ENCODE measurements at regions of chr17 and their contacts with region 1.

Region 1: DNA sequence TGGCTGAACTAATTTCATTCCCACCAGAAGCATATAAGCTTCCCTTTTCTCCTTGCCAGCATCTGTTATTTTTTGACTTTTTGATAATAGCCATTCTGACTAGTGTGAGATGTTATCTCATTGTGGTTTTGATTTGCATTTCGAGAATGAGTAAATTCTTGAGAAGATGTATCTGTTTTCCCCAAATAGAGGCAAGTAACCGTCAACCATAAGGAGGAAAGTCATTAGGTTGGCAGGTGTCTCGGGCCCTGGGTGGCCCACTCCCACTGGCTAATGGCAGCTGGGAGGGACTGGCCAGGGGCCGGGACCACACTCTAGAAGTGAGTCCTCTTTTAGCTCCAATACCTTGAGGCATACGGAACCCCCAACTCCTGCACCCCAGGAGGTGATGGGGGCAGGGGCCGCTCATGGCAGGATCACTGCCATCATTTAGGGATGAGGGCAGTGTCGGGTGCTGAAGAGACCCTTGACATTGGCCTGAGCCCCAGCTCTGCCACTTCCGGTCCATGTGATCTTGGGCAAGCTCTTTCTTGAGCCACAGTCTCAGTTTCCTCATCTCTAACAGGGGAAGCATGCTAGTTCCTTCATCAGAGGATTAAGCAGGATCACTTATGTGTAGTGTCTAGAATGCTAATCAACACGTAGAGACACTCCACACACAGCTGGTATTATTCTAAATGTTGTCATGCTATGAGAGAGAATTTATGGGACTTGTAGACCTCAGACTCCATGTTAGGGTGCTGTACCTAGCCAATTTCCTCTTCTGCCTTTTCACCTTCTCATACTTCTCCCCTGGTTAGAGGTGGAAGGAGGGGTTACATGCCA is 44.3 kb downstream of the RGS9 start:
- DNase-seq: no peak
- H3K4me3 ChIP-seq: no peak overlapping the region
- H3K27ac ChIP-seq: no peak overlapping the region
- H3K4me1 ChIP-seq: no peaks in the 10 kb centered on the region
- H3K27me3 ChIP-seq: no peaks in the 10 kb centered on the region
- CTCF ChIP-seq: no peak
- POLR2A ChIP-seq: no peak

Region 2: DNA sequence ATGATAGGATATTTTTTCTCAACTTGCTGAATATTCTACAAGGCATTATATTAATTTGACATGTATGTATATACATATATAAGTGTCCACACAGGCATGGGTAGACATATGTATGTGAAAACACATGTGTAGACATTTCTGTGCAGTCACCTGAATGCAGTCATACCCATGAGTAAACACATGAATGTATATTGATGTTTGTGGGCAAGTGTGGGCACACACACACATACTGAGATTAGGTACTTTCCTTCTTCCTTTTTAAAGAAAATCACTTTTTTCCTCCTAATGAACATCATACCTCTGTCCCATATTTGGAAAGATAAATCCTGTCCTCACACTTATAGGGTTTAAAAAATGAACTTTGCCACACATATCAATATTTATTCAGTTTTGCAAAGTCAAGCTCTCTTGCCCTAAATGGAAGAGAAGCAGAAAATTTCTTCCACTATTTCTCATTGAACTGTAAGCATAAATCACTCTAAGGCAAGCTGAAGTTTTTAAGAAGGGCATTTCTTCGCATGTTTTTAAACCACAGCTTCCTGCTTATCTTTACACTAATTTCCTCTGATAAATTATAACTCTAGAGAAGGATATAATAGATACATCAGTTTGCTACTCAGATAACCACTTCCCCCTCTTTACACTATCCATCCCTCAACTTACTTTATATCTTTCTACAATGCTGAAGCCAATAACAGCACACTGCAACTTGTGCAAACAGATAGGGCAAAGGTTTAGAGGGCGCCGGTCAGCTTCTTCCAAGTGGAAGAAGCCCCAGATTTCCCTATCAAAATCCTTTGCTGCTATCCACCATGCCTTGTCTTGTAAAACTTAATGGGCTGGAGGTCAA is 212.6 kb before region 1 on chr17:
- intact Hi-C with region 1: no loop called
- DNase-seq: no peak
- H3K4me3 ChIP-seq: no peak overlapping the region
- H3K27ac ChIP-seq: no peak overlapping the region
- H3K4me1 ChIP-seq: no peaks in the 10 kb centered on the region
- H3K27me3 ChIP-seq: no peaks in the 10 kb centered on the region
- CTCF ChIP-seq: no peak
- POLR2A ChIP-seq: no peak

Region 3: DNA sequence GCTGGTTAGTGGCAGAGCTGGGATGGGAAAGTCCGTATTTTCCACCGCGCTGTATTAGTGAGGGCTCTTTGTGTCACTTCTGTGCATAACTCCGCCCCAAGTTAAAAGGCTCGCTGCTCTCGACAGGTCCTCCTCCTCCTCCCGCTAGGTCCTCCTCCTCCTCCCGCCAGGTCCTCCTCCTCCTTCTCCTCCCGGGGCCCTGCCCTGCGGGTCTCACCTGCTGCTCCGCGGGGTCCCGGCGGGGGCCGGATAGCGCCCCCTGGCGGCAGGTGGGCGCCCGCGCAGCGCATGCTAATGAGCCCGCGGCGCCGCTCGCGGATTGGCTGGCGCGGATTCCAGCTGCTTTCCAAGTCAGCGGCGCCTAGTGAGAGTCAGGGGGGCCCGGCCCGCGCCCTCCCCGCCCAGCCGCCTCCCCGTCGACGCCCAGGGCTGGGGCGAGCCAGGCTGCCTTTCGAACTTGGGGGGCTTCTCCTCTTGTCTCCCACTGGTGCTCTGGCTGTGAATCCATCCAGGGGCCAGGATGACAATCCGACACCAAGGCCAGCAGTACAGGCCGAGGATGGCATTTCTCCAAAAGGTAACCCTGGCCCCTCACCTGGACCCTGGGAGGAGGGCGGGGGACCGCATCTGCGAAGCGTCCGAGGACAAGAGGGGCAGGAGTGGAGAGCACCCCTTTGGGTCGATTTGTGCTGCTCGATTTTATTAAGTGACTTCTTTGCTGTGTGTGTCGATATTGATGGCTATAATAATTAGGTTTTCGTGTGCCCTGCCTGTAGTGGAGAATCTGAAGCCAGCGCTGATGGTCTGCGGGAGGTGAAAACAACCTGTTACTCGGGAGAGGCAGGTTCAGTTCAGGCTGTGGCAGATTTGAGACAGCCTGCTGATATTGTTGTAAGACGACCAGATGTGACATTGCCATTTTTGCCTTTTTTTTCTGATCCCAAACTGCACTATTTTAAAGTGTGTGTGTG is 44.1 kb before region 1 on chr17 and contains the start of gene RGS9:
- intact Hi-C with region 1: loop called (anchors 5 kb)
- DNase-seq: peak; percentile 80
- H3K4me3 ChIP-seq: peak within 1 kb of the TSS; percentile 21 to 36
- H3K27ac ChIP-seq: no peak within 1 kb of the TSS
- H3K4me1 ChIP-seq: no peaks in the 10 kb centered on the region
- H3K27me3 ChIP-seq: no peaks in the 10 kb centered on the region
- CTCF ChIP-seq: peak; percentile 93 to 99 (median 96)
- POLR2A ChIP-seq: no peak
- total RNA-seq, gene RGS9: 7.9 to 9.3 TPM

Region 4: DNA sequence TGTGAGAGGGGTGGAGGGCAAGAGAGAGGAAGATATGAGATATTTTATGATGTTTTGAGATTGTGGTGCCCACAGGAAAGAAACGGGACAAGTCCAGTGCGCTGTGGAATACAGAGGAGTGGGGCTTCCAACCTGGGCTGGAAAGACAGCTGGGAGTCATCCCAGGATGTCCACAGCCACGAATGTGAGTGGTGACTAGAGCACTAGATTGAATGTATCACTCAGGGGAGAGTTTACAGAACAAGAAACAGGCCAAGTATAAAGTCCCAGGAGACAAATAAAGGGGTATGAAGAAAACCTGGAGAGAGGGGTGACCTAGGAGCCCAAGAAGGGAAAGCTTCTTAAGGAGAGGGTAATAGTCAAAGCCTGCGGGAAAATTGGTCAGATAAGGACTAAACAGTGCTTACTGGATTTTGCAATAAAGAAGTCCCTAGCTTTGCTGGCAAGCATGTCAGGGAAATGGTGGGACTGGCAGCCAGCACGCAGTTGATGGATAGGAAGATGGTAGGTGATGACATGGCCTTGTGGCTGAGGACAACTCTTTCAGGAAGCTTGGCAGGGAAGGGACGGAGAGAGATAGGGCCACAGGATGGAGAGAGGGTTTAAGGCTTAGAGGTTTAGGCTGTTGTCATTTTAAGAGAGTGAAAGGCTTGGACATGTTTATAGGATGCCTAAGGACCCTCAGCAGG is 265.5 kb after region 1 on chr17:
- intact Hi-C with region 1: no loop called
- DNase-seq: no peak
- H3K4me3 ChIP-seq: no peak overlapping the region
- H3K27ac ChIP-seq: no peak overlapping the region
- H3K4me1 ChIP-seq: no peaks in the 10 kb centered on the region
- H3K27me3 ChIP-seq: no peaks in the 10 kb centered on the region
- CTCF ChIP-seq: no peak
- POLR2A ChIP-seq: no peak

Measured in prostate gland (tissue), 2 donors.